ENCODE measurements at regions of chr4 and their contacts with region 1.

Region 1: DNA sequence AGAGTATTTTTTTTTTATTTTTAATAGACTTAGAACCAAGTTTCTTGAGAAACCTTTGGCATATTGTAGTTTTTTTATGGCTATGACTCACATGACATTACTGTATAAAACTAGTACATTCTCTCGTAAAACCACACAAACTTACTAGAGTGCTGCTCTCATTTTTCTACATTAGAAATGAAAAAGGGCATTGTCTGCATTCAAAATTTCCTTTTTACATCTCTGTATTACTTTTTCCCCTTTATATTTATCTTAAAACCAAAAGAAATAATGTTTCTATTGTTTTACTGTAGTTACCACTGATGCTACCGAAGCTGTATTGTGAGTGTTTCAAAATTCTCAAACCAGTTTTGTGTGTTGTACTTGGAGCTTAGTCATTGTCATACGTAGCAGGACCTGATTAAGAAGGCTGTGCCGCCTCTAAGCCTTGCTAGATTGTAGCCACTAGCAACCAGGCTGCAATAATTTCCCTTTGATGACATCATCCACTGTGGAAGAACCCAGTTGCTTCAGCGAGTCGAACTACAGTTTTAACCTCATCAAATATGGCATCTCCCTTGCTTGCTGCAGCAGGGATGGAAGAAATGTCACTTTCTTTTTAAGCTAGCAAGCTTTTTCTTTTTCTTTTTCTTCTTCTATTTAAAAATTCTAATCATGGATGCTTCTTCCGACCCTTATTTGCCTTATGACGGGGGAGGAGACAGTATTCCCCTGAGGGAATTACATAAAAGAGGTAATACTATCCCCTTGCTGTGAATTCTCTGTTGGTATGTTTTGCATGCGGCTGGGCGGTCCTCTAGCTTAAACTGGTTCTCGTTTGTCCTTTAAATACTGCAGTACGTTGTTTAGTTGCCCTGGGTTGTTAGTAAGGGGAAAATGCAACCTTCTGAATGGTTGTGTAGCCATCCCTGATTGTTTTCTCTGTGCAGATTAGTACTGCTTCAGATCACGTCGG is 39.6 kb downstream of the CLCN3 start:
- DNase-seq: peak; percentile 21 to 92 (median 46)
- ATAC-seq: peak; percentile 97
- H3K4me3 ChIP-seq: peak overlapping the region; percentile 24
- H3K4me3 Mint-ChIP-seq: peak overlapping the region; percentile 74
- H3K27ac ChIP-seq: peak overlapping the region; percentile 22 to 36
- H3K27ac Mint-ChIP-seq: peak overlapping the region; percentile 81
- H3K4me1 ChIP-seq: peaks cover 5% of the 10 kb centered on the region
- H3K4me1 Mint-ChIP-seq: peaks cover 33% of the 10 kb centered on the region
- H3K27me3 ChIP-seq: no peaks in the 10 kb centered on the region
- H3K27me3 Mint-ChIP-seq: no peaks in the 10 kb centered on the region
- CTCF ChIP-seq: no peak

Region 2: DNA sequence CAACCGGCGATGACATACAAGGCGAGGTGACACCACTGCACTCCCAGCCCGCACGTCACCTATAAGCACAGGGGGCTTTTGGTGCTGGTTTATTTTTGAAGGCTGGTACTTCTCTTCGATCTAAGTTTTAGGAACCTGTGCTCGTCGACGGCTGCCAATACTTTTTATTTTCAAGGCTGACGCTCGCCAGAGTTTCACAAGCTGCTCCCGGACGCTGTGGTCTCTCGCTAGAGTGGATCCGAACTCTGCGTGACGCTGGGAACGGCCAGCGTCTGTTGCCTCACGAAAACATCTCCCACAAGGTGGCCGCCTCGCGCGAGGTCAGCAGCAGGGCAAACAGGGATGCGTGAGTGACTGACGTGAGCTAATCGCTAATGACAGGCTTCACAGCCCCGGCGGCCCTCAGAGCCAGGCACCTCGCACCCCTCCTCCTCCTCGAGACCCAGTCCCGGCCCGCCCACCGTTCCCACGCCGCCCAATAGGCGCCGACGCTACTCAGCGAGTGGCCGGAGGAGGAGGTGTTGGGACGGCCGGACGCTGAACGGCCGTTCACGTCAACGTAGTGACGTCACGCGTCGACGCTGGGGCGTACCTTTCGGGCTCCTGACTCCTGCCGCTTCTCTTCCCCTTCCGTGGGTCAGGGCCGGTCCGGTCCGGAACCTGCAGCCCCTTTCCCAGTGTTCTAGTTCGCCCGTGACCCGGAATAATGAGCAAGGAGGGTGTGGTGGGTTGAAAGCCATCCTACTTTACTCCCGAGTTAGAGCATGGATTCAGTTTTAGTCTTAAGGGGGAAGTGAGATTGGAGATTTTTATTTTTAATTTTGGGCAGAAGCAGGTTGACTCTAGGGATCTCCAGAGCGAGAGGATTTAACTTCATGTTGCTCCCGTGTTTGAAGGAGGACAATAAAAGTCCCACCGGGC is 39.8 kb before region 1 on chr4 and contains the start of gene CLCN3:
- CTCF ChIA-PET with region 1: interaction called, 20 read pairs
- POLR2A ChIA-PET with region 1: interaction called, 11 read pairs
- intact Hi-C with region 1: loop called (anchors 1 to 5 kb)
- DNase-seq: peak; percentile 72 to 94 (median 87)
- ATAC-seq: peak; percentile 65
- H3K4me3 ChIP-seq: peak within 1 kb of the TSS; percentile 91
- H3K4me3 Mint-ChIP-seq: peak within 1 kb of the TSS; percentile 98
- H3K27ac ChIP-seq: peak within 1 kb of the TSS; percentile 94 to 96
- H3K27ac Mint-ChIP-seq: peak within 1 kb of the TSS; percentile 98
- H3K4me1 ChIP-seq: peaks cover 19% of the 10 kb centered on the region
- H3K4me1 Mint-ChIP-seq: peaks cover 74% of the 10 kb centered on the region
- H3K27me3 ChIP-seq: no peaks in the 10 kb centered on the region
- H3K27me3 Mint-ChIP-seq: no peaks in the 10 kb centered on the region
- CTCF ChIP-seq: no peak
- total RNA-seq, gene CLCN3: 9.0 to 9.2 TPM

Region 3: GRCh38 chr4:169627307-169627706 is 32.7 kb before region 1 on chr4:
- CTCF ChIA-PET with region 1: interaction called, 20 read pairs
- POLR2A ChIA-PET with region 1: interaction called, 4 read pairs
- intact Hi-C with region 1: loop called in 1 of 2 experiments (anchors 5 kb)
- DNase-seq: no peak
- ATAC-seq: no peak
- H3K4me3 ChIP-seq: no peak overlapping the region
- H3K4me3 Mint-ChIP-seq: no peak overlapping the region
- H3K27ac ChIP-seq: no peak overlapping the region
- H3K27ac Mint-ChIP-seq: peak overlapping the region; percentile 23
- H3K4me1 ChIP-seq: peaks cover 15% of the 10 kb centered on the region
- H3K4me1 Mint-ChIP-seq: peaks cover 65% of the 10 kb centered on the region
- H3K27me3 ChIP-seq: no peaks in the 10 kb centered on the region
- H3K27me3 Mint-ChIP-seq: no peaks in the 10 kb centered on the region
- CTCF ChIP-seq: no peak

Region 4: GRCh38 chr4:169716677-169717076 is 56.7 kb after region 1 on chr4:
- CTCF ChIA-PET with region 1: no interaction called
- POLR2A ChIA-PET with region 1: no interaction called
- intact Hi-C with region 1: loop called in 1 of 2 experiments (anchors 10 kb)
- DNase-seq: no peak
- ATAC-seq: no peak
- H3K4me3 ChIP-seq: no peak overlapping the region
- H3K4me3 Mint-ChIP-seq: no peak overlapping the region
- H3K27ac ChIP-seq: no peak overlapping the region
- H3K27ac Mint-ChIP-seq: no peak overlapping the region
- H3K4me1 ChIP-seq: no peaks in the 10 kb centered on the region
- H3K4me1 Mint-ChIP-seq: peaks cover 13% of the 10 kb centered on the region
- H3K27me3 ChIP-seq: no peaks in the 10 kb centered on the region
- H3K27me3 Mint-ChIP-seq: no peaks in the 10 kb centered on the region
- CTCF ChIP-seq: no peak

Region 5: GRCh38 chr4:169757575-169758184 is 97.7 kb after region 1 on chr4 and contains the start of gene HPF1:
- CTCF ChIA-PET with region 1: no interaction called
- POLR2A ChIA-PET with region 1: no interaction called
- intact Hi-C with region 1: loop called in 1 of 2 experiments (anchors 5 kb)
- DNase-seq: peak; percentile 83 to 99 (median 92)
- ATAC-seq: peak; percentile 97
- H3K4me3 ChIP-seq: peak within 1 kb of the TSS; percentile 83
- H3K4me3 Mint-ChIP-seq: peak within 1 kb of the TSS; percentile 85
- H3K27ac ChIP-seq: peak within 1 kb of the TSS; percentile 23 to 29
- H3K27ac Mint-ChIP-seq: peak within 1 kb of the TSS; percentile 26
- H3K4me1 ChIP-seq: peaks cover 17% of the 10 kb centered on the region
- H3K4me1 Mint-ChIP-seq: peaks cover 33% of the 10 kb centered on the region
- H3K27me3 ChIP-seq: no peaks in the 10 kb centered on the region
- H3K27me3 Mint-ChIP-seq: no peaks in the 10 kb centered on the region
- CTCF ChIP-seq: no peak
- total RNA-seq, gene HPF1: 4.4 to 4.8 TPM

Measured in CD4-positive, alpha-beta T cell (primary cell).